SK-N-SH (cell line): ENCODE measurements at regions of chr5 and their contacts with region 1.

Region 1: DNA sequence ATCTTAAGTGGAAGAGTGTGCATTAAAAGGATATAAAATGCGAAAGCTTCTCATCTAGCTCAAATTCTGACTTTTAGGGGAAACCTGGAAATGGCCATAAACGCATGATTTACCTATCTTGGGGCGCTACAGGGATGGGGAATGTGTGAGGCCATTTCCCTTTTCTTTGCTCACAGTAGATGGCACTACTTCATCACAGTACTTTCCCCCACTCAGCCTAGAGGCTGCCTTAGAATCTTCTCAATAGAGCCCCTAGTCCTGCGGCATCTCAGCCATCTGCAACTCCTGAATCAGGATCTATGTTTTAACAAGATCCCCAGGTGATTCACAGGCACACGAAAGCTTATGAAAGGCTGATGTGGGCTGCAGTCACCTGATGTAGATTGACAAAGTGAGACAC is 110.8 kb downstream of the LHFPL2 start:
- DNase-seq: peak; percentile 58
- H3K4me3 ChIP-seq: no peak overlapping the region
- H3K27ac ChIP-seq: peak overlapping the region in 1 of 2 experiments; percentile 97; a peak in 1 of 4 replicates
- H3K4me1 ChIP-seq: peaks cover 7 to 33% of the 10 kb centered on the region in 2 experiments; a peak in 3 of 4 replicates
- H3K27me3 ChIP-seq: no peaks in the 10 kb centered on the region
- CTCF ChIP-seq: peak; percentile 58
- EP300 ChIP-seq: no peak
- RAD21 ChIP-seq: peak; percentile 90

Region 2: GRCh38 chr5:78129597-78129996 is 408.2 kb before region 1 on chr5:
- CTCF ChIA-PET with region 1: no interaction called
- POLR2A ChIA-PET with region 1: no interaction called
- DNase-seq: peak; percentile 49
- H3K4me3 ChIP-seq: no peak overlapping the region
- H3K27ac ChIP-seq: peak overlapping the region in 1 of 2 experiments; percentile 91; a peak in 2 of 4 replicates
- H3K4me1 ChIP-seq: peaks cover 0 to 11% of the 10 kb centered on the region in 2 experiments; a peak in 2 of 4 replicates
- H3K27me3 ChIP-seq: no peaks in the 10 kb centered on the region
- CTCF ChIP-seq: no peak
- EP300 ChIP-seq: peak in 1 of 2 experiments; percentile 80; a peak in 2 of 4 replicates
- RAD21 ChIP-seq: no peak; the same call in 1 of the 2 replicates

Region 3: DNA sequence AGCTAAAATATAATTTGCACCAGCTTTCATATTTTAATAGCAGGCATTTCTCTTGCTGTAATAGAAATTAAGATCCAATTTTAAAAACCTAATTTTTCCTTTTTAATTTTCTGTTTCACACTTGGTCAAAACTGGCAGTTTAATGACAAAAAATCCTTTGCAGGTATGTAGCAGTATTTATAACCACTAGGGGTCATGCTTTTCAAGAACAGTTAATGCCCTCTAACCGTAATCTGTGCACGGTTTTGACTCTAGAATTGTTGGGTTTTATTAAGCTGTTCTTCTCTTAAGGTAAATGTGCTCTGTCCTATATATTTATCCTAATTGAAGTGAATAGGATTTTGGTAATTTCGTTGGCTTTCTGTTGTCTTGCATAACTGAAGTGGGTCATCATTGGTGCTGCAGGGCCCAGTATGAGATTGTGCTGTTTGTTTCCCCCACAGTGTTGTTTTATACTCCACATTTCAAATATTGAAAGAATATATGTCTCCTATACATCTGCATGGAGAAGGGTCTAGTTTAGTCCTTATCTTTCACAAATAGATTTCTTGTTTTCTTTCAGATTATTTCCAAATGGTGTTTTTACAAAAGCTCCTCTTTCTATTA is 70.0 kb before region 1 on chr5:
- CTCF ChIA-PET with region 1: interaction called, 35 read pairs
- POLR2A ChIA-PET with region 1: no interaction called
- DNase-seq: peak; percentile 36
- H3K4me3 ChIP-seq: no peak overlapping the region; a peak in 1 of 4 replicates
- H3K27ac ChIP-seq: no peak overlapping the region
- H3K4me1 ChIP-seq: no peaks in the 10 kb centered on the region; a peak in 1 of 4 replicates
- H3K27me3 ChIP-seq: no peaks in the 10 kb centered on the region
- CTCF ChIP-seq: peak; percentile 86
- EP300 ChIP-seq: no peak
- RAD21 ChIP-seq: peak; percentile 73

Region 4: GRCh38 chr5:78527054-78527859 is 10.6 kb before region 1 on chr5:
- CTCF ChIA-PET with region 1: interaction called, 12 read pairs
- POLR2A ChIA-PET with region 1: no interaction called
- DNase-seq: no peak
- H3K4me3 ChIP-seq: no peak overlapping the region
- H3K27ac ChIP-seq: peak overlapping the region; percentile 41 to 97; a peak in 3 of 4 replicates
- H3K4me1 ChIP-seq: peaks cover 4 to 31% of the 10 kb centered on the region in 2 experiments
- H3K27me3 ChIP-seq: no peaks in the 10 kb centered on the region
- CTCF ChIP-seq: no peak
- EP300 ChIP-seq: no peak
- RAD21 ChIP-seq: no peak

Region 5: GRCh38 chr5:78638423-78638822 is 100.6 kb after region 1 on chr5:
- CTCF ChIA-PET with region 1: interaction called, 10 read pairs
- POLR2A ChIA-PET with region 1: no interaction called
- DNase-seq: peak; percentile 64
- H3K4me3 ChIP-seq: no peak overlapping the region
- H3K27ac ChIP-seq: peak overlapping the region; percentile 74 to 92
- H3K4me1 ChIP-seq: peaks cover 45 to 52% of the 10 kb centered on the region in 2 experiments
- H3K27me3 ChIP-seq: no peaks in the 10 kb centered on the region
- CTCF ChIP-seq: no peak
- EP300 ChIP-seq: peak; percentile 41 to 80; a peak in 2 of 4 replicates
- RAD21 ChIP-seq: no peak

Region 6: GRCh38 chr5:78809444-78809843 is 271.6 kb after region 1 on chr5:
- CTCF ChIA-PET with region 1: interaction called, 11 read pairs
- POLR2A ChIA-PET with region 1: no interaction called
- DNase-seq: peak; percentile 70
- H3K4me3 ChIP-seq: no peak overlapping the region
- H3K27ac ChIP-seq: peak overlapping the region in 1 of 2 experiments; percentile 96; a peak in 2 of 4 replicates
- H3K4me1 ChIP-seq: peaks cover 23 to 69% of the 10 kb centered on the region in 2 experiments
- H3K27me3 ChIP-seq: no peaks in the 10 kb centered on the region
- CTCF ChIP-seq: no peak
- EP300 ChIP-seq: peak in 1 of 2 experiments; percentile 90; a peak in 2 of 4 replicates
- RAD21 ChIP-seq: peak; percentile 43

Region 7: DNA sequence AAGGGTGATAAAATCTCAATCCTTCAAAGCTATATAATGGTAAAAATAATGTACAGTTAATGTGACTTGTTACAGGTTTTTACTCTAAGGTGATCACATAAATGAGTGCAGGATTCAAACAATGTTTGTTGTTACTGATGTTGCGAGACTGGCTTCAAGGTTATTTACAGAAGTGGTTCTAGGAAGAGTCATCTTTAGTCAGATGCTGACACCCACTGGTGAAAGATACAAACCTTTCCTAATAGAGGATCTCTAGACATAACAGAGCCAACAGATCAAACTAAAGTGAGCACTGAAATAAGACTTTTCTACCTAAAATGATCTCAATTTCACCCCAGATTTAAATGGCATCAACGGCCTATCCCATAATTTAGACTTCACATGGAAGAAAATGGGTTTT is 427.1 kb after region 1 on chr5:
- CTCF ChIA-PET with region 1: interaction called, 61 read pairs
- POLR2A ChIA-PET with region 1: no interaction called
- DNase-seq: peak; percentile 49
- H3K4me3 ChIP-seq: no peak overlapping the region; a peak in 1 of 4 replicates
- H3K27ac ChIP-seq: no peak overlapping the region
- H3K4me1 ChIP-seq: peaks cover 0 to 4% of the 10 kb centered on the region in 2 experiments; a peak in 2 of 4 replicates
- H3K27me3 ChIP-seq: no peaks in the 10 kb centered on the region
- CTCF ChIP-seq: peak; percentile 72
- EP300 ChIP-seq: no peak
- RAD21 ChIP-seq: peak; percentile 95